Calu3 (cell line): ENCODE measurements at regions of chr9 and their contacts with region 1.

Region 1: DNA sequence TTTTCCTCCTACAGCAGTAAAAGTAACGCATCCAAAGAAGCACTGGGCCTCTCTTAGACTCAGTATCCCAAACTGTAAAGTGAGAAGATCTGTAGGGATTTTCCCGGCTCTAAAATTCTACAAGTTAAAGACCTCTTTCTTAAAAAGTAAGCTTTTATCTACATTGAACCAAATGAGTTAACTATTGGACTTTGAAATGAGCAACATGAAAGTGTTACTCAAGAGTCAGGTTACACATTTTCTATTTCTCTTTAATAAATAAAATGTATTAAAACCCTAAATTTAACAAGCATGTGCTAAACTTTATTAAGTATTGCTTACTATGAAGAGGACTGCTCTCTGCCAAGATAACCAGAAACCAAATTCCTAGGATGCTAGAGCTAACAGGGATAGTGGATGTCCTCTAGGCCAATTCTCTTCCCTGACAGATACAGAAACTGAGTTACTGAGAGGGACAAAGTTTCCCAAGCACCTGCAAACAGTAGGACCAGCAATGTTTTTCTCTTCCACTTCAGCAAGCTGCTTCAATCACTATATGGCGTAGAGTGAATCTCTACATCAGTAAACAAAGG is 21.7 kb downstream of the NFIB start:
- DNase-seq: no peak
- H3K4me3 Mint-ChIP-seq: no peak overlapping the region
- H3K27ac Mint-ChIP-seq: no peak overlapping the region
- H3K4me1 Mint-ChIP-seq: peaks cover 28% of the 10 kb centered on the region
- H3K27me3 Mint-ChIP-seq: no peaks in the 10 kb centered on the region
- CTCF ChIP-seq: no peak

Region 2: GRCh38 chr9:14251154-14252071 is 40.9 kb before region 1 on chr9:
- CTCF ChIA-PET with region 1: no interaction called
- intact Hi-C with region 1: no loop called
- DNase-seq: peak; percentile 76
- H3K4me3 Mint-ChIP-seq: peak overlapping the region; percentile 45
- H3K27ac Mint-ChIP-seq: peak overlapping the region; percentile 69
- H3K4me1 Mint-ChIP-seq: peaks cover 21% of the 10 kb centered on the region
- H3K27me3 Mint-ChIP-seq: no peaks in the 10 kb centered on the region
- CTCF ChIP-seq: no peak

Region 3: GRCh38 chr9:14271093-14271673 is 21.1 kb before region 1 on chr9:
- CTCF ChIA-PET with region 1: interaction called, 14 read pairs
- intact Hi-C with region 1: no loop called
- DNase-seq: no peak
- H3K4me3 Mint-ChIP-seq: no peak overlapping the region
- H3K27ac Mint-ChIP-seq: peak overlapping the region; percentile 35
- H3K4me1 Mint-ChIP-seq: peaks cover 41% of the 10 kb centered on the region
- H3K27me3 Mint-ChIP-seq: no peaks in the 10 kb centered on the region
- CTCF ChIP-seq: no peak